ENCODE measurements at regions of chr19 and their contacts with region 1.

Region 1: GRCh38 chr19:17859533-17860330 is at the start of gene RPL18A:
- DNase-seq: peak; percentile 99
- H3K4me3 Mint-ChIP-seq: peak within 1 kb of the TSS; percentile 99
- H3K27ac Mint-ChIP-seq: peak within 1 kb of the TSS; percentile 100
- H3K4me1 Mint-ChIP-seq: peaks cover 31% of the 10 kb centered on the region
- H3K27me3 Mint-ChIP-seq: peaks cover 1% of the 10 kb centered on the region
- total RNA-seq, gene RPL18A: 2,494 and 2,556 TPM in 2 replicates

Region 2: GRCh38 chr19:17405250-17406038 is 454.3 kb before region 1 on chr19 and contains the start of gene BST2:
- intact Hi-C with region 1: loop called (anchors 10 kb)
- DNase-seq: peak; percentile 58
- H3K4me3 Mint-ChIP-seq: peak within 1 kb of the TSS; percentile 85
- H3K27ac Mint-ChIP-seq: peak within 1 kb of the TSS; percentile 89
- H3K4me1 Mint-ChIP-seq: peaks cover 32% of the 10 kb centered on the region
- H3K27me3 Mint-ChIP-seq: no peaks in the 10 kb centered on the region
- total RNA-seq, gene BST2: 146 and 148 TPM in 2 replicates

Region 3: DNA sequence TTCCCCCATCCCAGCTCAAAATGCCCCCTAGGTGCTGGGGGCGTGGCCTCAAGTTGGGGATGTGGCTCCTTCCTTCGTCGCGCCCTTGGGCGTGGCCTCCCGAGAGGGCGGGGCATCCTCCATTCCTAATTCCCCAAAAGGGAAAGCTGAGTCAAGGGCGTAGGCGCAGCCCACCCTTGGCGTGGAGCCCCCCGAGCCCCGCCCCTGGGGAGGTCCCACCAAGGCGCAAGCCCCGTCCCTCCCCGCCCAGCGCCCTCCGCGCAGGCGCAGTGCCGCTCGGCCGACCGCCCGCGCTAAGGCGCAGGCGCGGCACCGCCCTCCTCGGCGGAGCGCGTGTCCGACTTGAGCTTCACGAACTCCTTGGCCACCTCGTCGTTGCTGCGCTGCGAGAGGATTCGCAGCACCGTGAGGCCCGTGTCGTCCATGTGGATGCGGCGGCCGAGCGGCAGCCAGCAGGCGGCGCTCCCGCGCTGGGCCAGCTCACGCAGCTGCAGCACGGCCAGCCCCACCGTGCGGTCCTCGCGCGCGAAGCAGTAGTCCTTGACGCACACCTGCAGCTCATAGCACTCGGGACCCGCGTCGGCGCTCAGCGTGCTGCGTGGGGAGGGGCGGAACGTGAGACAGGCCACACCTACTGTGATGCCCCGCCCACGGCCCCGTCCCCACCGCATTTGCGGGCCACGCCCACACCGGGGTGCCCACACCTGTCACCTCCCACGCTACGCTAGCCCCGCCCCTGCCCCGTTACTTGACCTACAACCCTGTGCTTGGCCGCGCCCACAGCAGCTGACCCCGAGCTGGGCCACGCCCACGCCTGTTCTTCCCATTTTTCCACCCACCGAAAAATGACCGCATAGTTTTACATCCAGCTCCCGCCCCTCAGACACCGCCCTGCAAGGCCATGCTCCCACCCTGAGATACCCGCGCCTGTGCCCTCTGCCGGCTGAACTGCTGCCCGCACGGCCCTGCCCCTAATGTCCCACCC is 253.7 kb before region 1 on chr19:
- intact Hi-C with region 1: loop called (anchors 2 kb)
- DNase-seq: peak; percentile 74
- H3K4me3 Mint-ChIP-seq: peak overlapping the region; percentile 74
- H3K27ac Mint-ChIP-seq: peak overlapping the region; percentile 70
- H3K4me1 Mint-ChIP-seq: peaks cover 8% of the 10 kb centered on the region
- H3K27me3 Mint-ChIP-seq: peaks cover 37% of the 10 kb centered on the region

Region 4: GRCh38 chr19:17784201-17785008 is 75.3 kb before region 1 on chr19:
- intact Hi-C with region 1: loop called (anchors 1 kb)
- DNase-seq: peak; percentile 56
- H3K4me3 Mint-ChIP-seq: no peak overlapping the region
- H3K27ac Mint-ChIP-seq: peak overlapping the region; percentile 63
- H3K4me1 Mint-ChIP-seq: peaks cover 17% of the 10 kb centered on the region
- H3K27me3 Mint-ChIP-seq: no peaks in the 10 kb centered on the region

Region 5: DNA sequence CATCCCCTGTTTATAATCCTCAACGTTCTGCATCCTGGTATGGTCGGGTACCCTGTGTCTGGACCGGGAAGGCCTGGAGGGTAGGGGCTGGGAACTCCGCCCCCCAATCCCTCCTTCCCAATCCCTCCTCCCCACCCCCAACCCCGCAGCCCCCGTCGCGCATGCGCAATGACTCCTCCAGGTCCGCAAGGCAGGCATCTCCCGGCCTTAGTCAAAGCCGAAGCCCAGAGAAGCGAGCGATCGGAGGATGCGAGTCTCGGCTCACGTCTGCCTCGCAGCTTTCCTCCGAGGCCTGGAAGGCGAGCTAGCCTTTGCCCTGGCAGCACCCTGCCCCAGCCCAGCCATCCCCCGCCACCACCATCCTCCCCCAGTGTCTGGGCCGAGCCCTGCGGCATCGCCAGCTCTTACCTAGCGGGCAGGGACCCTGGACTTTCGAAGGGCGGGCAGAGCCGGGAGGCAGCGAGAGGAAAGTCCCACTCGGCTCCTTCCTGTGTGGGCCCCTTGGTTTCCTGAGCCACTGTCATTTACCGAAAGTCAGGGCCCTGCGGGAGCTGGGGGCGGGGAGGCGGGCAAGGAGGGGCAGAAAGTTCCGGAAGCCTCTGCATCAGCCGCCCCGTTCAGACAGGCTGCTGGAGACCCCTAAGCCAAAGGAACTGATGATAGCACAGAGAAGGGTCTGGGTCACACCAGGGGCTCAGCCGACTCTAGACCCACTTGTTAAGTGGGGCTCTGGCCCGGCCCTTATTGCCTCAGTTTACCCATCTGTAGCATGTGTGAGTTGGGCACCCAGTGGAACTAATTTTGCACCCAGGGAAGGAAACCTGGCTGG is 12.0 kb before region 1 on chr19 and contains the start of gene JAK3:
- intact Hi-C with region 1: loop called (anchors 1 kb)
- DNase-seq: peak; percentile 87
- H3K4me3 Mint-ChIP-seq: peak within 1 kb of the TSS; percentile 93
- H3K27ac Mint-ChIP-seq: peak within 1 kb of the TSS; percentile 99
- H3K4me1 Mint-ChIP-seq: peaks cover 70% of the 10 kb centered on the region
- H3K27me3 Mint-ChIP-seq: no peaks in the 10 kb centered on the region
- total RNA-seq, gene JAK3: 222 and 227 TPM in 2 replicates

Region 6: GRCh38 chr19:18000935-18001778 is 141.4 kb after region 1 on chr19:
- intact Hi-C with region 1: loop called (anchors 2 kb)
- DNase-seq: peak; percentile 86
- H3K4me3 Mint-ChIP-seq: peak overlapping the region; percentile 92
- H3K27ac Mint-ChIP-seq: peak overlapping the region; percentile 95
- H3K4me1 Mint-ChIP-seq: peaks cover 27% of the 10 kb centered on the region
- H3K27me3 Mint-ChIP-seq: peaks cover 2% of the 10 kb centered on the region

Measured in activated T-helper 1 cell treated with anti-CD3 and anti-CD28 coated beads, Interleukin-12 subunit alpha, Interleukin-12 subunit beta, Interleukin-2, Interleukin-4 antibody, amounts not matched to agents 30 ng/mL and 10 ng/mL and 1 ng/mL, durations not matched to agents 14 hours and 24 hours and 36 hours (primary cell).